ENCODE measurements at regions of chr3 and their contacts with region 1.

Region 1: GRCh38 chr3:69682878-69683806 is 56.1 kb upstream of the MITF start:
- DNase-seq: no peak
- ATAC-seq: no peak
- H3K4me3 ChIP-seq: no peak overlapping the region
- H3K27ac ChIP-seq: no peak overlapping the region
- H3K4me1 ChIP-seq: no peaks in the 10 kb centered on the region
- H3K27me3 ChIP-seq: no peaks in the 10 kb centered on the region
- CTCF ChIP-seq: no peak
- POLR2A ChIP-seq: no peak

Region 2: DNA sequence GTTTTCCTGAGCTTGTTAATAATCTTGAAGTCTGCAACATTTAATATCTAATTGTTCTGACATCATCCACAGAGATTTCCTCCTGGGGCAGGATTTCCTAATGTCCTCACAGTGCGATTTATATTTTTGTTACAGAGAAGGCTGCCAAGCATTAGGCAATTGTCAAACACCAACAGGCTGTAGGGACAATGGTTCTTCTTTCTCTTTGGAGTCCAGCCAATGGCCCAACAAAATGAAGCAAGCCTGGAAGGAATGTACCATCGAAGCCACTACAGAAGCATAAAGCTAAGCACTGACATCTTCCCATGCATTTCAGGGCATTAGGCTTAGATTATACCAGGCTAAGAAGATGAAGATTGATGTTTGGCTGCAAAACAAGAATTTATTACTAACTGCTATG is 124.2 kb before region 1 on chr3:
- intact Hi-C with region 1: no loop called
- DNase-seq: peak in 1 of 3 donors; percentile 75
- ATAC-seq: peak; percentile 91 to 96 (median 92)
- H3K4me3 ChIP-seq: no peak overlapping the region
- H3K27ac ChIP-seq: no peak overlapping the region
- H3K4me1 ChIP-seq: peaks cover 0 to 16% (median 0%) of the 10 kb centered on the region in 4 donors
- H3K27me3 ChIP-seq: no peaks in the 10 kb centered on the region
- CTCF ChIP-seq: no peak
- POLR2A ChIP-seq: no peak

Region 3: GRCh38 chr3:69948246-69948862 is 265.2 kb after region 1 on chr3:
- intact Hi-C with region 1: loop called in 1 of 2 experiments (anchors 10 kb)
- DNase-seq: no peak
- ATAC-seq: peak in 2 of 4 donors; percentile 42 to 48
- H3K4me3 ChIP-seq: no peak overlapping the region
- H3K27ac ChIP-seq: no peak overlapping the region
- H3K4me1 ChIP-seq: no peaks in the 10 kb centered on the region
- H3K27me3 ChIP-seq: no peaks in the 10 kb centered on the region
- CTCF ChIP-seq: peak; percentile 46 to 66 (median 57)
- POLR2A ChIP-seq: no peak